ENCODE measurements at regions of chr12 and their contacts with region 1.

Region 1: GRCh38 chr12:46124848-46125619 is 134.7 kb upstream of the SCAF11 start:
- DNase-seq: peak; percentile 75
- H3K4me3 ChIP-seq: peak overlapping the region in 1 of 3 experiments; percentile 27
- H3K27ac ChIP-seq: no peak overlapping the region
- H3K4me1 ChIP-seq: peaks cover 4% of the 10 kb centered on the region
- H3K27me3 ChIP-seq: peaks cover 16 to 29% of the 10 kb centered on the region in 2 experiments
- CTCF ChIP-seq: peak; percentile 51 to 53
- POLR2A ChIP-seq: no peak

Region 2: DNA sequence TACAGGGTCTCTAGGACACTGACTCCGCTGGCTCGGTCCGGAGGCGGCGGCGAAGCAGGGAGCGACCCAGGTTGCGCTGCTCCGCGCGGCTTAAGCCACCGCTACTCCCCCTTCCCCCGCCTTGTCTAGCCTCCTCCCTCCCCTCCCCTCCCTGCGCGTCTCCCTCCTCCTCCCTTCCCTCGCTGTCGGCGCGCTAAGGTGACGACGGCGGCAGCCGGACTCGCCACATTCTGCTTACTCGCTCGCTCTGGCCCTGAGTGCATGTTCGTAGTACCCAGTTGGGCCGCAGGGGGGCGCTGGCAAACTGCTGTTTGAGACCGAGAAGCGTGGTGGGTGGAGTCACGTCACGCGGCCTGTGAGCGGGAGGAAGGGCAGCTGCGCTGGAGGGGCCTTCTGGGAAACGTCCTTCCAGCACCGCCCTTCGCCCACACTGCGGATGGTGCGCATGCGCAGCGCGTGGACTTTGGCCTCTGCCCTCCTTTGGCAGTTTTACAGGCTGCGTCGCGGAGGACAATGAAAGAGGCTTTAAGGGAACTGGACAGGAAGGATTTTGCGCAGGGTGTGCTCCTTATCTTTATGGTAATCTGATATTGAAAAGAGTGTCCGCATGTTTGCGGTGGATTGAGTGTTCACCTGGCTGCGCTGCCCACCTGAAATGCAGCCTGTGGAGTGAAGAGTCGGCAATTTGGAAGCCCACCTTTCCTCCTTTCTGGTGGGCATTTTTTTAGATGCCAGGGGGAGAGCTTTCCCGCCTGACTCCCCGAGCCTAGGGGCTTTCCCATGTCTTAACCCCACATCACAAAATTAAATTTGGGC is 134.4 kb before region 1 on chr12 and contains the start of gene SCAF11:
- CTCF ChIA-PET with region 1: interaction called, 8 read pairs
- POLR2A ChIA-PET with region 1: no interaction called
- dilution Hi-C with region 1: no loop called
- intact Hi-C with region 1: loop called (anchors 5 kb)
- DNase-seq: peak; percentile 100
- H3K4me3 ChIP-seq: peak within 1 kb of the TSS; percentile 56 to 91 (median 86)
- H3K27ac ChIP-seq: peak within 1 kb of the TSS; percentile 79
- H3K4me1 ChIP-seq: peaks cover 16% of the 10 kb centered on the region
- H3K27me3 ChIP-seq: no peaks in the 10 kb centered on the region
- CTCF ChIP-seq: peak; percentile 96 to 99
- POLR2A ChIP-seq: peak; percentile 16
- total RNA-seq, gene SCAF11: 95.0 and 109 TPM in 2 replicates

Region 3: DNA sequence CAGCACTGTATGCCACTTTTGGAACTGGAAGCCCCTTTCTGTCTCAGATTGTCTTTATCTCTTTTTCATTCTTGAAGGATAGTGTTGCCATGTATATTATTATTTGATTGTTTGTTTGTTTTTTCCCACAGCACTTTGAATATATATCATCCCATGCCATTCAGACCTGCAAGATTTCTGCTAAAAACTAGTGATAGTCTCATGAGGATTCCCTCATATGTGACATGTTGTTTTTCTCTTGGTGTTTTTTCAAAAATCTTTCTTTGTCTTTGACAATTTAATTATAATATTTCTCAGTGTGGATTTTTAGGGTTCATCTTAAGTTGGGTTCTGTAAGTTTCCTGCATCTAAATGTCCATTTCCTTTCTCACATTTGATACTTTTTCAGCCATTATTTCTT is 97.9 kb before region 1 on chr12:
- CTCF ChIA-PET with region 1: no interaction called
- POLR2A ChIA-PET with region 1: no interaction called
- dilution Hi-C with region 1: no loop called
- intact Hi-C with region 1: no loop called
- DNase-seq: no peak
- H3K4me3 ChIP-seq: no peak overlapping the region
- H3K27ac ChIP-seq: no peak overlapping the region
- H3K4me1 ChIP-seq: no peaks in the 10 kb centered on the region
- H3K27me3 ChIP-seq: peaks cover 6 to 12% of the 10 kb centered on the region in 2 experiments
- CTCF ChIP-seq: no peak
- POLR2A ChIP-seq: no peak

Region 4: DNA sequence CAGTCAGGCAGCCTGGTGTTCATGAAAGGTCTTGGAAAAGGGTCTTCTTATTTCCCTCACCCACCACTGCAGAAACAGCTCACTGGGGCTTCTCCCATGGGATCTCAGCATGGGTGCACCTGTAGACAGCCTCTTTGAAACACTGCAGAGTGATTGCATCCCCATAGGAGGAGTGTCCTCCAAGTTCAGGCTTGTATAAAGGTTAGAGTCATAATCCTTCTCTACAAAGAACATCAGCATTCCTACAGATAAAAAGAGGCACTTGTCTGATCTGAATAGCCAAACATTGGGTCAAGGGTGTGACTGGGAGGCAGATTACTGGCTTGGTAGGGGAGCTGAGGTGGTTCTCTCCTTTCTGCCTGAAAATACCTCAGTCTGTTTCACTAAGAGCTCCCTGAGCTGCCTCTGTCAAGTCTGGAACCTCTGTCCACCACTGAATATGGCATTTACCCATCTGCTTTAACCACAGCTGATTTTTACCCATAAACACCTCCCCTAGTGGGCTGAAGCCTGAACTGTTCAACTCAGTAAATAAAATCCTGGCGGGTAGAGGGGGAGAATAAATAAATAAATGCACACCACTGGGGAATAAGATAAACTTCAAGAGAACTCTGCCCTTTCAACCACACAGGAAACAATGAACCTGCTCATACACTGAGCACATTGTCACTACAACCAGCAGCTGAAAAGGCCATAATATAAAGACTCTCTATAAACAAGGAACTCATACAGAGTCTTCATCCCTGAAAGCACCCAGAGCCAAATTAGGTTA is 13.9 kb before region 1 on chr12:
- CTCF ChIA-PET with region 1: interaction called, 17 read pairs
- POLR2A ChIA-PET with region 1: no interaction called
- dilution Hi-C with region 1: no loop called
- intact Hi-C with region 1: no loop called
- DNase-seq: no peak
- H3K4me3 ChIP-seq: no peak overlapping the region
- H3K27ac ChIP-seq: no peak overlapping the region
- H3K4me1 ChIP-seq: no peaks in the 10 kb centered on the region
- H3K27me3 ChIP-seq: peaks cover 0 to 4% of the 10 kb centered on the region in 2 experiments
- CTCF ChIP-seq: peak in 1 of 2 donors; percentile 7
- POLR2A ChIP-seq: no peak

Region 5: DNA sequence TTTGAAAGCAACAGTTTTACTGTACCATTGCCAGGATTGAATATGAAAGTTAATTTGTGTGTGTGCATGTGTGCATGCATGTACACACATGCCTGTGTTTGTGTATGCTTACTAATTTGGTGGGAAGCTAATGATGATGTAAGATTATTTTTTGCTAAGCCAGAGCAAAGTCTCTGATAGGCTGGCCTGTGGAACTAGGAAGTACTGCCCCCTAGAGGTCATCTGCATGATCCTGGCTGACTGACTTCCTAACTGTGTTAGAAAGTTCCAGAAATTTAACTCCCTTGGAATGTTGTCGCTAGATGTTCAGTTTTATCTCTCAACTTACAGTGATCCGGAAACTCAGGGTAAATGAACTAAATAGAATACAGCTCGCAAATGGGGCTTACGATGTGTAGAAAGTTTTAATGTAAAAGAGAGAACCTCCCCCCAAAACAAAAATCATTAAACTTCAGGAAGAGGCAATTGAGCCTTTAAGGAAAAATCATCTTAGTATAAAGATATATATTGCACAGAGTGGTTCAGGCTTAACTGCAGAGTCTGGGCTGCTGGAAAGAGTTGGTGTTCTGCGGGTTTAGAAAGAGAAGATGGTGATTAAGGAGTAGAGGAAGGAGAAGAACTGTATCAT is 178.1 kb after region 1 on chr12:
- CTCF ChIA-PET with region 1: interaction called, 48 read pairs
- POLR2A ChIA-PET with region 1: interaction called, 8 read pairs
- dilution Hi-C with region 1: no loop called
- intact Hi-C with region 1: loop called (anchors 1 kb)
- DNase-seq: peak; percentile 35
- H3K4me3 ChIP-seq: no peak overlapping the region
- H3K27ac ChIP-seq: no peak overlapping the region
- H3K4me1 ChIP-seq: no peaks in the 10 kb centered on the region
- H3K27me3 ChIP-seq: peaks cover 3 to 12% of the 10 kb centered on the region in 2 experiments
- CTCF ChIP-seq: peak; percentile 54 to 58
- POLR2A ChIP-seq: no peak

Region 6: DNA sequence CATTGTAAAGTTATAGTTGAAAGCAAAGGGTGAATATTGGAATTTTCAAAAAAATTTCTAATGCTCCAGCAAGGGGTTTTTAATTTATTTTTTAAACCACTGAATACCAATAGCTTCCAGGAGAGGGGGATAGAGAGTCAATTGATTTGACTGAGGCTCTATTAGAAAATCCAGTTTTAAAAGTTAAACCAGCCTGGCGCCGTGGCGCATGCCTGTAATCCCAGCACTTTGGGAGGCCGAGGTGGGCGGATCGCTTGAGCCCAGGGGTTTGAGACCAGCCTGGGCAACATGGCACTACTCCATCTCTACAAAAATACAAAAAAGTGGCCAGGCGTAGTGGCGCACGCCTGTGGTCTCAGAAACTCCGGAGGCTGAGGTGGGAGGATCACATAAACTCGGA is 550.7 kb after region 1 on chr12:
- CTCF ChIA-PET with region 1: interaction called, 5 read pairs
- POLR2A ChIA-PET with region 1: no interaction called
- dilution Hi-C with region 1: no loop called
- intact Hi-C with region 1: loop called (anchors 10 kb)
- DNase-seq: peak; percentile 54
- H3K4me3 ChIP-seq: no peak overlapping the region
- H3K27ac ChIP-seq: no peak overlapping the region
- H3K4me1 ChIP-seq: no peaks in the 10 kb centered on the region
- H3K27me3 ChIP-seq: no peaks in the 10 kb centered on the region
- CTCF ChIP-seq: peak; percentile 36 to 44
- POLR2A ChIP-seq: no peak

Region 7: DNA sequence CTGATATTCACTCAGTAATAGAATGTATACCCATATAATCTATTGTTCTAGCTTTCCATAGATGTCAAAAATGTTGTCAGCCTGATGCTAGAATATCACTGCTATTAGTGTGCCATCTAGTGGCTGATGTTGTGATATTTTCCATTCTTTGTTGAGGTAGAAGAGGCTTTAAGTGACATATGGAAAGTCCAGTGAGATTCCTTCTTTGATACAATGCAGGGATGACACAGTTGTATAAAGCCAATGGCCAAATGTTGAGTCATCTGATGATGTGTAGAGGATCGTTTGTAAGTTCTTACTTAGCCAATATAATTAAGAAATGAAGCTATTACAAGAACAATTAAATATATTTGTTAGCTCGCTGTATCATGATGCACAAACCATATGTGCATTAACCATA is 896.3 kb after region 1 on chr12:
- CTCF ChIA-PET with region 1: interaction called, 85 read pairs
- POLR2A ChIA-PET with region 1: no interaction called
- dilution Hi-C with region 1: no loop called
- intact Hi-C with region 1: loop called (anchors 1 kb)
- DNase-seq: peak; percentile 91
- H3K4me3 ChIP-seq: no peak overlapping the region
- H3K27ac ChIP-seq: no peak overlapping the region
- H3K4me1 ChIP-seq: peaks cover 20% of the 10 kb centered on the region
- H3K27me3 ChIP-seq: no peaks in the 10 kb centered on the region
- CTCF ChIP-seq: peak; percentile 32 to 38
- POLR2A ChIP-seq: no peak